Pancreas (tissue), 10 donors: ENCODE measurements at regions of chr2 and their contacts with region 1.

Region 1: GRCh38 chr2:70789304-70790135 is 923 bp downstream of the FIGLA start:
- DNase-seq: peak; percentile 58 to 85 (median 71)
- ATAC-seq: peak; percentile 88 to 95 (median 92)
- H3K4me3 ChIP-seq: peak overlapping the region in 3 of 4 donors; percentile 1 to 36 (median 15)
- H3K27ac ChIP-seq: no peak overlapping the region
- H3K4me1 ChIP-seq: peaks cover 0 to 11% (median 0%) of the 10 kb centered on the region in 3 donors
- H3K27me3 ChIP-seq: peaks cover 0 to 17% (median 2%) of the 10 kb centered on the region in 4 donors
- CTCF ChIP-seq: peak in 3 of 4 donors; percentile 7 to 52 (median 41)

Region 2: DNA sequence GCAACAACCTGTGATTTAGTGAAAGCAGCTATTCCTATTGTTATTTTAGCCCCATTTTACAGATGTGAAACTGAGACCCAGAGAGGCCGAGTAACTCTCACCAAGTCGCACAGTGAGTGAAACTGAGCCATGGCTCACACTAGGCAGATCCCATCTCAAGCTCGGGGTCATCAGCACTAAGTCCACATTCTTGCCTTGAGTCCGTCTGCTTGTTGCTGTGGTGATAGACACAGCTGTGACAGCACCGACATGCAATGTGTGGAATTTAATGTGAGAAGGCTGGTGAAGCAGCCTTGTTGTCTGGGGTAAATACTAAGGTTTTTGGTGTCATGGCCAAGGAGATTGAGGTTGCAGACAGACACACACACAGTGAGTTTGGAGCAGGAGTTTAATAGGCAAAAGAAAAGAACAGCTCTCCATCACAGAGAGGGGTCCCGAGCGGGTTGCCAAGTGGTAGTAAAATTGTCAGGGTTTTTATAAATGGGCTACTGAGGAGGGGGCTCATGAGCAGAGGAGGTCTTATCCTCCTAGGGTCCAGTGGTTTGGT is 1000.3 kb before region 1 on chr2:
- intact Hi-C with region 1: no loop called
- DNase-seq: no peak
- ATAC-seq: peak in 3 of 4 donors; percentile 9 to 53 (median 41)
- H3K4me3 ChIP-seq: no peak overlapping the region
- H3K27ac ChIP-seq: peak overlapping the region in 2 of 4 donors; percentile 44 to 68
- H3K4me1 ChIP-seq: peaks cover 20 to 37% (median 32%) of the 10 kb centered on the region in 3 donors
- H3K27me3 ChIP-seq: no peaks in the 10 kb centered on the region
- CTCF ChIP-seq: no peak

Region 3: GRCh38 chr2:70570041-70570663 is 219.4 kb before region 1 on chr2:
- intact Hi-C with region 1: no loop called
- DNase-seq: no peak
- ATAC-seq: peak in 3 of 4 donors; percentile 35 to 67 (median 49)
- H3K4me3 ChIP-seq: no peak overlapping the region
- H3K27ac ChIP-seq: no peak overlapping the region
- H3K4me1 ChIP-seq: no peaks in the 10 kb centered on the region
- H3K27me3 ChIP-seq: peaks cover 0 to 3% (median 0%) of the 10 kb centered on the region in 4 donors
- CTCF ChIP-seq: no peak

Region 4: DNA sequence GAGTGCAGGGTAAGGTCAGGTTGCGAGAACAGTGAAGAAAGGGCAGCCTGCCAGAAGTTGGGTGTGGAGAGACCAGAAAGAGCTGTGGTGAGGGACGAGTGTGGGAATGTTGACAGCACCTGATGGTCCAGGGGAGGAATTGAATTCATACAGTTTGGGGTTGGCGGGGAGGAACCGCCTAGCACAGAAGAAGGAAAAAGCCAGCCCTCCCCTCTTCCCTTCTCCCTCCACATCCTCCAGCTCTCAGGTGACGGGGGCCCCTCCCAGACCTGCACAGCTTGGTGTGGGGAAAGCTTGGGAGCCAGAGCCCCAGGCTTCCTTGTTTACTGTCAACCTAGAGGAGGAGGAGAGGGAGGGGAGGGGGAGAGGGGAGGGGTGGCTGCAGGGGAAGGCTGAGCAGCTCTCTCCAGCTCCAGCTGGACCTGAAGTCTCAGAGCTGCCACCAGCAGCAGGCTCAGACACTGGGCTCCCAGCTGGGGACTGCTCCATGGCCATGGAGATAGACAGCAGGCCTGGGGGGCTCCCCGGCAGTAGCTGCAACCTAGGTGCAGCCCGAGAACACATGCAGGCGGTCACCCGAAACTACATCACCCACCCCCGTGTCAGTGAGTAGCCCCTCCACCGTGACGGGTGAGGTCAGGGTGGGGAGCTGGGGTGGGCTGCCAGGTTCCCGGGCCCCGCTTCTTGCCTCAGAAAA is 146.1 kb after region 1 on chr2 and contains the start of gene ATP6V1B1:
- intact Hi-C with region 1: loop called in 1 of 3 experiments (anchors 10 kb)
- DNase-seq: peak in 3 of 6 donors; percentile 11 to 43 (median 24)
- ATAC-seq: peak in 3 of 4 donors; percentile 64 to 82 (median 74)
- H3K4me3 ChIP-seq: no peak within 1 kb of the TSS
- H3K27ac ChIP-seq: no peak within 1 kb of the TSS
- H3K4me1 ChIP-seq: no peaks in the 10 kb centered on the region
- H3K27me3 ChIP-seq: no peaks in the 10 kb centered on the region
- CTCF ChIP-seq: no peak
- total RNA-seq, gene ATP6V1B1: 1.4 to 3.1 (median 2.4) TPM

Region 5: DNA sequence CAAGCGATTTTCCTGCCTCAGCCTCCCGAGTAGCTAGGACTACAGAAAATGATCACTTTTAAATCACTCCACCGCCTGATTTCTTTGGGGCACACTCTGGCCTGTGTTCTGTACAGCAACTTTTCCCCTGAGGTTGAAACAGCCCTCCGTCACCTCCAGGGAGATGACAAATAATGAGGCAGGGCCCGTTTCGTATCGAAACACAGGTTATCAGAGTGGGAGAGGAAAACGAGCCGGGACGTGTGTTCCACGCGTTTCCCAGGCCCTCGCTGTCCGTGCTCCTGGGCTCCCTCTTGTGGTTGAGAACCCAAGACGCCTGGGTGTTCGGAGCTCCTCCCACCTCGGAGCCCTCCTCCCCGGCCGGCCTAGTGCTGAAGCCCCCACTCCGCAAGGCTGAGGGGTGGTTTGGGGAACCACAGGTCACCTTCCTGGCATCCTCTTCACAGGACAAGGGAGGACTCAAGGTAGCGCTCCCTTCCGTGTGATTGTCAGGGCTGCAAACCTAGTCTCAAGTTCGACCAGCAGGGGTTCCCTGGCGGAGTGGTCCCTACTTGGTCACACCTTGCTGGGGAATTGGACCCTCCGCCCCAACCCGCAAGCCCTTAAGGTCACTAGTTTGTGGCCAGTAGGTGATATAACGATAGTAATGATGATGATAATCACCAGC is 158.9 kb after region 1 on chr2:
- intact Hi-C with region 1: no loop called
- DNase-seq: peak; percentile 71 to 91 (median 84)
- ATAC-seq: peak; percentile 89 to 99 (median 96)
- H3K4me3 ChIP-seq: peak overlapping the region in 2 of 4 donors; percentile 9 to 39
- H3K27ac ChIP-seq: no peak overlapping the region
- H3K4me1 ChIP-seq: no peaks in the 10 kb centered on the region
- H3K27me3 ChIP-seq: no peaks in the 10 kb centered on the region
- CTCF ChIP-seq: peak; percentile 70 to 88 (median 74)